GM10248 (cell line): ENCODE measurements at regions of chr11 and their contacts with region 1.

Region 1: DNA sequence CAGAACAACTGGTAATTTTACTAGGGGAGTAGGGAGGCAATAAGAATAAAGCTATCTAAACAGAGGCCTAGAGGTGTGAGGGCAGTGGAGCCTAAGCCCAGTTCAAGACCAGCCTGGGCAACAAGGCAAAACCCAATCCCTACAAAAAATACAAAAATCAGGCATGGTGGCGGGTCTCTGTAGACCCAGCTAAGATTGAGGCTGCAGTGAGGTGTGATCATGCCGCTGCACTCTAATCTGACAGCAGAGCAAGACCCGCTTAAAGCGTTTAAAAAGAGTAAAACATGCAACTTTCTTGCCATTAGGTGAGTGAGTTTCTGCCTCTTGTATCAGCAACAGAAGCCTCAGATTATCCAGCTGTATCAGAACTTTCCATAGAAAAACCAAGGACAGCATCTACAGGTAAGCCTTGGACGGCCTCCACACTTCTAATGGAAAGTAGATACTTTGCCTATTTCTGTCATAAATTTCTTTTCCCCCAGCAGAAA is 12.1 kb downstream of the TAF1D start:
- DNase-seq: no peak
- CTCF ChIP-seq: no peak

Region 2: GRCh38 chr11:93585758-93586157 is 143.4 kb before region 1 on chr11:
- CTCF ChIA-PET with region 1: no interaction called
- POLR2A ChIA-PET with region 1: no interaction called
- DNase-seq: no peak
- CTCF ChIP-seq: no peak

Region 3: DNA sequence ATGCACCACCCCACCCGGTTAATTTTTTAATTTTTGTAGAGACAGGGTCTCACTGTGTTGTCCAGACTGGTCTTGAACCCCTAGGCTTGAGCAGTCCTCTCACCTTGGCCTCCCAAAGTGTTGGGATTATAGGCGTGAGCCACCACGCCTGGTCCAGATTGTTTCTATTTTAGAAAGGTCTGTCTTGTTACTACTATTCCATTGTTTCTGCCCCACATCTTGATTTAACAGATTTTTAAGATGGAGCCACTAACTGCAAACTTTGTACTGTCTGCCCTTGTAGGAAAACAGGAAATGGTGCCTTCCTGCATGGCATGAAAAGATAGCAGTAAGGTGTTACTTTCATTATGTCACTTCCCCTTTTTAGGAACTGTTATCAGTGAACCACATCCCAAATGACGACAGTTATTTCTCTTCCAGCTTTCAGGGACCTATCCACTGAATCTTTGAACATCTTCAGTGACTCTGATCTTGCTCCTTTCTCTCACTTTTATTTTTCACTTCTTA is 11.1 kb before region 1 on chr11:
- CTCF ChIA-PET with region 1: interaction called, 15 read pairs
- POLR2A ChIA-PET with region 1: interaction called, 3 read pairs
- DNase-seq: peak; percentile 47
- CTCF ChIP-seq: no peak